ENCODE measurements at regions of chr18 and their contacts with region 1.

Region 1: DNA sequence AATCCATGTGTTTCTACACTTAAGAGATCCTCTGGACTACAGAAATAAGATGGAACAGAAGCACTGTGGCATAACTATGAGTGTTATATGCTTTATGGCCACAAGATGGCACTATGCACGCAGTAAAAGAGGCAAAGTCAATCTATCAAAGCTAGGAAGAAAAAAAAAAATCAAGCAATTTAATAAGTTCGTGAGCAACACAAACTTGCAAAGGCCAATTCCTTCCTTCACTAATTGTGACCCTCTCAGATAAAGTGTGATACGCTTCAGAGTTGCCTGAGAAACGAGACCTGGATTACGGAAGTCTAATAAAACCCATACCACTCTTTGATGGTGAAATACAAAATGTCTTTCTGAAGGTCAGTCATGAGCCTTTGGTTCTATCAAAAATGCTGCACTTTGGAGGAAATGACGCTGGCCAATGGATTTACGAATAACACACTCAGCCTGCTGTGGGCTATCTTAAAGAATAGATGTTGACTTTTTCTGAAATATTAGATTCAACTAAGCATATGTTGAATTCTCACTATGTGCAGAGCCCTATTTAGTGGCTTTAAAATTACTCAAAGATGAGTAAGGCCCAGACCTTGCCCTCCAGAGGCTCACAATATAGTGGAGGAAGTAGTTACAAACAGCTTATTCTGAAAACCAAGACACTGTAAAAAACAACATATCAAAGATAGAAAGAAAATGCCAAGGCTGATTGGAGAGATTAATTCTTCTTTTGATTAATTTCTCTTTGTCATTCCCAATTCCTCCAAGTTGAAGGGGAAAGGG is 35.5 kb upstream of the TTR start:
- DNase-seq: no peak

Region 2: DNA sequence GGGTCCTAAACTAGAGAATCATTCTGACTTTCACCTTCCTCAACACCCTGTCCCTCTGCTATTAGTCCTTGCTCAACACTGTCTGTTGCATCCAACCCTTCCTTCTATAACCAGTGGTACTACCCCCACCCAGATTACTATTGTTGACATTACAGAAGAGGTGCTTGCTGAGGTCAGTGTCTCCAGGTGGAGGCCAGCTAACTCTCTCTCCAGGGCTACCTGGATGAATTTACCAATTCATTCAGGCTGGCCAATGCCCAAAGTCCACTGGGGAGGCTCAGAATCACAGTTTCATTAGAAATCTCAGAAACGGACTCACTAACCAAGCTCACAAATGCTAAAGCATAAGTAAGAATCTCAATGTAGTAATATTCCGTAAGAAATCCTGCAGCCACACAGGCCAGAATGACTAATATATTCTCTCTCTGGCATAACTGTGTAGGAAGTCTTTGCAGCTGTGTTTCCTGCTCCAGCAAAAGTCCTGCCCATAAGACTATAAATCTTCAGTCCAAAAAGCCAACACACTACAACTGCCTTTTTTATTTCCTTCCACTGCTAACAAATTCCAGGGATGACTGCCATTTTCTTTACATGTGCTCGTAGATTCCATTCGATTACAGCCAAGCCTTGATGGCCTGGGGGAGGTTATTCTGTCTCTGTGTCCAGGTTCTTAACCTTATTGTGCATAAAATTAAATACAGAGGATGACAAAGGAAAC is 25.5 kb after region 1 on chr18:
- intact Hi-C with region 1: no loop called
- DNase-seq: no peak

Region 3: GRCh38 chr18:31722369-31722957 is 166.3 kb after region 1 on chr18:
- intact Hi-C with region 1: loop called in 1 of 2 experiments (anchors 10 kb)
- DNase-seq: peak; percentile 84

Region 4: GRCh38 chr18:31819106-31819924 is 263.2 kb after region 1 on chr18:
- intact Hi-C with region 1: loop called in 1 of 2 experiments (anchors 10 kb)
- DNase-seq: no peak

Measured in posterior vena cava (tissue), 2 donors.